ENCODE measurements at regions of chr1 and their contacts with region 1.

Region 1: GRCh38 chr1:163071405-163072255 is 2.5 kb downstream of the RGS4 start:
- DNase-seq: peak; percentile 33 to 74
- ATAC-seq: peak in 4 of 8 donors; percentile 37 to 58 (median 44)
- H3K4me3 ChIP-seq: peak overlapping the region in 7 of 10 donors; percentile 21 to 55 (median 49)
- H3K27ac ChIP-seq: peak overlapping the region in 3 of 10 donors; percentile 33 to 42 (median 37)
- H3K4me1 ChIP-seq: peaks cover 0 to 7% (median 0%) of the 10 kb centered on the region in 9 donors
- H3K27me3 ChIP-seq: peaks cover 0 to 39% (median 4%) of the 10 kb centered on the region in 7 donors
- CTCF ChIP-seq: peak; percentile 23 to 75 (median 66)

Region 2: GRCh38 chr1:162854245-162854882 is 217.3 kb before region 1 on chr1:
- intact Hi-C with region 1: loop called in 1 of 10 experiments (anchors 10 kb)
- DNase-seq: peak; percentile 28 to 47
- ATAC-seq: peak in 4 of 8 donors; percentile 58 to 76 (median 70)
- H3K4me3 ChIP-seq: no peak overlapping the region
- H3K27ac ChIP-seq: no peak overlapping the region
- H3K4me1 ChIP-seq: no peaks in the 10 kb centered on the region
- H3K27me3 ChIP-seq: peaks cover 0 to 3% (median 0%) of the 10 kb centered on the region in 7 donors
- CTCF ChIP-seq: peak; percentile 43 to 84 (median 73)

Region 3: DNA sequence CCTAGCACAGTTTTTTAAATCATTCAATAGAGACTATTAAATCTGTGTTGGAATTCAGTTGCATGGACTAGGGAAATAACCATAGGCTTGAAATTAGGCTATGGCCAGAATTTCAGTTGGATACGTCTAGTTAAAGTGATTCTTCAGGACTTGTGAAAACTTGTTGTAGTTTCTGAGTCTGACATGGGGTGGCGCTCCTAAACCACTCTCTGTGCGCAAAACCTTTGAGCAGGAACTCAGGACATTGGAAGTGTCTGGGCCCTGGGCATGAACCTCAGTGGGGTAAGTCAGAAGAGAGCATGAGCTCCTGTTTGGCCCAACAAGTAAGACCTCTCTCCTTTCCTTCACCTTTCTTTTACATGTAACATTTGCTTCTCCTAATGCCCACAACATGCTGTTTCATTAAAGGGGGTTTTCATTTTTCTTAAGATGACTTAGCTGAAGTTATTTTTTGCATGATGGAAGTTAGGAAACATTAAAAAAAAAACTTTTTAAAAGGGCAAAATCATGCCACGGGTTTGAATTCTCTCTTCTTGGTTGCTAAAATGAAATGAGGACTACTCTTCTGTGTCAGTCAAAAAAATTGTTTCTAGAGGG is 193.5 kb before region 1 on chr1:
- intact Hi-C with region 1: loop called in 9 of 10 experiments (anchors 1 to 10 kb)
- DNase-seq: peak; percentile 22 to 58
- ATAC-seq: peak; percentile 52 to 71 (median 68)
- H3K4me3 ChIP-seq: no peak overlapping the region
- H3K27ac ChIP-seq: no peak overlapping the region
- H3K4me1 ChIP-seq: no peaks in the 10 kb centered on the region
- H3K27me3 ChIP-seq: peaks cover 0 to 10% (median 0%) of the 10 kb centered on the region in 7 donors
- CTCF ChIP-seq: peak; percentile 50 to 79 (median 74)

Region 4: GRCh38 chr1:163120372-163120771 is 48.7 kb after region 1 on chr1:
- intact Hi-C with region 1: loop called in 2 of 10 experiments (anchors 5 to 10 kb)
- DNase-seq: no peak
- ATAC-seq: no peak
- H3K4me3 ChIP-seq: no peak overlapping the region
- H3K27ac ChIP-seq: no peak overlapping the region
- H3K4me1 ChIP-seq: no peaks in the 10 kb centered on the region
- H3K27me3 ChIP-seq: no peaks in the 10 kb centered on the region
- CTCF ChIP-seq: no peak

Region 5: GRCh38 chr1:163240705-163241104 is 169.1 kb after region 1 on chr1:
- intact Hi-C with region 1: no loop called
- DNase-seq: no peak
- ATAC-seq: no peak
- H3K4me3 ChIP-seq: no peak overlapping the region
- H3K27ac ChIP-seq: no peak overlapping the region
- H3K4me1 ChIP-seq: no peaks in the 10 kb centered on the region
- H3K27me3 ChIP-seq: no peaks in the 10 kb centered on the region
- CTCF ChIP-seq: no peak